IMR-90 (cell line): ENCODE measurements at regions of chr4 and their contacts with region 1.

Region 1: DNA sequence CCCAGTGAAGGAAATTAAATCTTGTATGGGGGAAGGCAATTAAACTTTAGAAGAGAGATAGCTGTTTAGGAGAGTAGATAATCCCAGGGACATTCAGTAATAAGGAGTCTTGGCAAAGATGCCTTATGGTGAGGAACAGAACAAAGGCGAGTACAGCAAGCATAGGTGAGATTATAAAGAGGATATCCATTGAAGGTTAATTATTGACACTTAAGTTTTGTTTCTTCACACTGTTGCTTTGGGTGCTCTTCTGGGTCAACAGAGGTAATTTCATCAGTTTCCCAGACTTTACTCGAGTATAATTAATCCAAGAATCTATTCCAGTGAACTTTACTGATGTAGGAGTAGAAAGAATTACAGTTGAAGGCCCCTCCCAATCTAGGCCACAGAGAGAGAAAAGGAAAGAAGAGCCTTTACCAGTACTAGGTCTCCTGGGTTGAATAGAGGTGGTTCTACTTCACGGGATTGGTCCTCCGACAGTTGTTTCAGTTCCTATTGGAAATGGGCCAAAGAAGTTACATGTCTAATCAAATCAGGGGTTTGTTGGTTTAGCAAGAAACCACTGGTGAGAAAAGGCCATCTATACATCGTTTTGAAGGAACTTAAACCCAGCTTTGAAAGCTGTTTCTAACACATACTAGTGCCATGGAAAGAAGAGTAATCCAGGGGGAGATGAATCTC is 27.2 kb downstream of the EPGN start:
- DNase-seq: no peak
- ATAC-seq: no peak
- H3K4me3 ChIP-seq: no peak overlapping the region
- H3K27ac ChIP-seq: no peak overlapping the region
- H3K4me1 ChIP-seq: no peaks in the 10 kb centered on the region
- H3K27me3 ChIP-seq: no peaks in the 10 kb centered on the region
- CTCF ChIP-seq: no peak
- POLR2A ChIP-seq: no peak
- RAD21 ChIP-seq: no peak

Region 2: DNA sequence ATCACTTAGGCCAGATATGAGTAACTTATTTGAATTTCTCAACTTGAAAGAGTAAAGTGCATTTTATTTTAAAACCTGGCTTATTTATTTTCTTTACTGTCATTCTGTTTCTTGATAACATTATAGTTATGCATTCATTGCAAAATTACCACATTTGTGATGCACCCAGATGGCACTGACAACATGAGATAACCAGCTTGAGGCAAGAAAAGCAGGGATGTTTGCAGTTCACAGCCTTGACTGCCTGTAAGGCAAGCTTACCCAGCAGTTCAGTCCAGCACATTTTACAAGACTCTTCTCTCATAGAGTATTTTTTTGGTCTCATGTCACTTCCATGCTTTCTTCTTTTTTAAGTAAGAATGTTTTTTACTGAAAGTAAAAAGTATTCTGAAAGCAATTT is 52.6 kb before region 1 on chr4:
- CTCF ChIA-PET with region 1: no interaction called
- POLR2A ChIA-PET with region 1: no interaction called
- dilution Hi-C with region 1: no loop called
- in situ Hi-C with region 1: no loop called
- intact Hi-C with region 1: no loop called
- DNase-seq: no peak
- ATAC-seq: peak; percentile 35; the same call in 1 of the 2 replicates
- H3K4me3 ChIP-seq: no peak overlapping the region
- H3K27ac ChIP-seq: no peak overlapping the region
- H3K4me1 ChIP-seq: peaks cover 4% of the 10 kb centered on the region
- H3K27me3 ChIP-seq: no peaks in the 10 kb centered on the region
- CTCF ChIP-seq: no peak
- POLR2A ChIP-seq: no peak
- RAD21 ChIP-seq: no peak

Region 3: GRCh38 chr4:74444891-74445642 is 109.6 kb after region 1 on chr4 and contains the start of gene AREG:
- CTCF ChIA-PET with region 1: no interaction called
- POLR2A ChIA-PET with region 1: no interaction called
- dilution Hi-C with region 1: no loop called
- in situ Hi-C with region 1: no loop called
- intact Hi-C with region 1: no loop called
- DNase-seq: peak; percentile 41
- ATAC-seq: peak; percentile 90
- H3K4me3 ChIP-seq: peak within 1 kb of the TSS; percentile 90
- H3K27ac ChIP-seq: peak within 1 kb of the TSS; percentile 64; the same call in 1 of the 2 replicates
- H3K4me1 ChIP-seq: 0 out of 2 replicates have a peak, but pooled peaks cover 2% of the 10 kb centered on the region
- H3K27me3 ChIP-seq: no peaks in the 10 kb centered on the region
- CTCF ChIP-seq: peak; percentile 57
- POLR2A ChIP-seq: no peak
- RAD21 ChIP-seq: peak; percentile 49
- total RNA-seq, gene AREG: 0.18 and 0.28 TPM in 2 replicates

Region 4: GRCh38 chr4:74814052-74814451 is 478.6 kb after region 1 on chr4:
- CTCF ChIA-PET with region 1: no interaction called
- POLR2A ChIA-PET with region 1: no interaction called
- dilution Hi-C with region 1: no loop called
- in situ Hi-C with region 1: loop called (anchors 10 kb)
- intact Hi-C with region 1: no loop called
- DNase-seq: no peak
- ATAC-seq: no peak
- H3K4me3 ChIP-seq: no peak overlapping the region
- H3K27ac ChIP-seq: no peak overlapping the region
- H3K4me1 ChIP-seq: no peaks in the 10 kb centered on the region
- H3K27me3 ChIP-seq: no peaks in the 10 kb centered on the region
- CTCF ChIP-seq: no peak
- POLR2A ChIP-seq: no peak
- RAD21 ChIP-seq: no peak

Region 5: GRCh38 chr4:75736862-75737261 is 1401.4 kb after region 1 on chr4:
- CTCF ChIA-PET with region 1: no interaction called
- POLR2A ChIA-PET with region 1: no interaction called
- dilution Hi-C with region 1: no loop called
- in situ Hi-C with region 1: no loop called
- intact Hi-C with region 1: no loop called
- DNase-seq: peak; percentile 20
- ATAC-seq: no peak
- H3K4me3 ChIP-seq: no peak overlapping the region
- H3K27ac ChIP-seq: no peak overlapping the region
- H3K4me1 ChIP-seq: peaks cover 2% of the 10 kb centered on the region; the same call in 1 of the 2 replicates
- H3K27me3 ChIP-seq: no peaks in the 10 kb centered on the region
- CTCF ChIP-seq: no peak
- POLR2A ChIP-seq: no peak
- RAD21 ChIP-seq: no peak